Psoas muscle (tissue), 8 donors: ENCODE measurements at regions of chr2 and their contacts with region 1.

Region 1: GRCh38 chr2:100984892-100985379 is 17.2 kb upstream of the RPL31 start:
- DNase-seq: peak; percentile 78 to 88
- ATAC-seq: peak; percentile 77 to 88 (median 82)
- H3K4me3 ChIP-seq: no peak overlapping the region
- H3K27ac ChIP-seq: no peak overlapping the region
- H3K4me1 ChIP-seq: no peaks in the 10 kb centered on the region
- H3K27me3 ChIP-seq: no peaks in the 10 kb centered on the region
- CTCF ChIP-seq: peak; percentile 92

Region 2: DNA sequence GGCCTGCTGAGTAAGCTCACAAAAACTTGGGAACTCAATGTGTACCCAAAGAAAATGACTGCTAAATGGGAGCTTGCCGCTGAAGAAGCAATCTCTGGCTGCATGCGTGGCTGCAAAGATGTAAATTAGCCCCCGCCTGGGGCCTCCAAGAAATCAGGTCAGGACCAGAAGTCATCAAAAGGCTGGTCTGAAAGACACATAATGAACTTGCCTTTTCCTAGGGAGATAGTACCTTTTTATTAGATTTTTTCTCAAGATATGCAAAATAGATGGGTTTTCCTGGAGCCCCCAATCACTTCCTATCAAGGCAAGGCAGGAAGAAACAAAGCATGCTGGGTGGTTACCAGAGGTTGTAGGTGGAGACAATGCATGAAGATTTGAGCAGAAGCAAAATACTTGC is 383.3 kb before region 1 on chr2:
- intact Hi-C with region 1: loop called (anchors 2 kb)
- DNase-seq: no peak
- ATAC-seq: no peak
- H3K4me3 ChIP-seq: no peak overlapping the region
- H3K27ac ChIP-seq: no peak overlapping the region
- H3K4me1 ChIP-seq: peaks cover 6% of the 10 kb centered on the region
- H3K27me3 ChIP-seq: no peaks in the 10 kb centered on the region
- CTCF ChIP-seq: no peak

Region 3: GRCh38 chr2:100610381-100610831 is 374.5 kb before region 1 on chr2:
- intact Hi-C with region 1: loop called (anchors 1 to 2 kb)
- DNase-seq: peak; percentile 71 to 79
- ATAC-seq: peak; percentile 74 to 85 (median 81)
- H3K4me3 ChIP-seq: no peak overlapping the region
- H3K27ac ChIP-seq: no peak overlapping the region
- H3K4me1 ChIP-seq: no peaks in the 10 kb centered on the region
- H3K27me3 ChIP-seq: no peaks in the 10 kb centered on the region
- CTCF ChIP-seq: peak; percentile 55

Region 4: GRCh38 chr2:100730346-100730745 is 254.6 kb before region 1 on chr2:
- intact Hi-C with region 1: loop called (anchors 1 to 5 kb)
- DNase-seq: peak; percentile 63 to 68
- ATAC-seq: peak; percentile 51 to 80 (median 62)
- H3K4me3 ChIP-seq: no peak overlapping the region
- H3K27ac ChIP-seq: no peak overlapping the region
- H3K4me1 ChIP-seq: peaks cover 4% of the 10 kb centered on the region
- H3K27me3 ChIP-seq: no peaks in the 10 kb centered on the region
- CTCF ChIP-seq: peak; percentile 59

Region 5: GRCh38 chr2:100857915-100858314 is 127.0 kb before region 1 on chr2:
- intact Hi-C with region 1: no loop called
- DNase-seq: no peak
- ATAC-seq: no peak
- H3K4me3 ChIP-seq: no peak overlapping the region
- H3K27ac ChIP-seq: no peak overlapping the region
- H3K4me1 ChIP-seq: no peaks in the 10 kb centered on the region
- H3K27me3 ChIP-seq: no peaks in the 10 kb centered on the region
- CTCF ChIP-seq: no peak